ENCODE measurements at regions of chr19 and their contacts with region 1.

Region 1: GRCh38 chr19:15418588-15419412 is at the start of gene AKAP8L:
- DNase-seq: peak; percentile 98 to 99
- H3K4me3 ChIP-seq: peak within 1 kb of the TSS; percentile 89
- H3K4me3 Mint-ChIP-seq: peak within 1 kb of the TSS; percentile 96
- H3K27ac Mint-ChIP-seq: peak within 1 kb of the TSS; percentile 98
- H3K4me1 ChIP-seq: peaks cover 6% of the 10 kb centered on the region; the same call in 1 of the 2 replicates
- H3K4me1 Mint-ChIP-seq: peaks cover 6% of the 10 kb centered on the region
- H3K27me3 ChIP-seq: no peaks in the 10 kb centered on the region
- H3K27me3 Mint-ChIP-seq: no peaks in the 10 kb centered on the region
- CTCF ChIP-seq: peak; percentile 70 to 92
- total RNA-seq, gene AKAP8L: 112 and 127 TPM in 2 replicates

Region 2: GRCh38 chr19:15091901-15092753 is 326.7 kb before region 1 on chr19:
- CTCF ChIA-PET with region 1: interaction called, 5 read pairs
- POLR2A ChIA-PET with region 1: interaction called, 10 read pairs
- intact Hi-C with region 1: no loop called
- DNase-seq: peak in 1 of 2 experiments; percentile 63
- H3K4me3 ChIP-seq: no peak overlapping the region
- H3K4me3 Mint-ChIP-seq: no peak overlapping the region
- H3K27ac Mint-ChIP-seq: no peak overlapping the region
- H3K4me1 ChIP-seq: no peaks in the 10 kb centered on the region
- H3K4me1 Mint-ChIP-seq: no peaks in the 10 kb centered on the region
- H3K27me3 ChIP-seq: no peaks in the 10 kb centered on the region
- H3K27me3 Mint-ChIP-seq: peaks cover 12% of the 10 kb centered on the region
- CTCF ChIP-seq: peak; percentile 30 to 60

Region 3: GRCh38 chr19:15379083-15379995 is 39.5 kb before region 1 on chr19 and contains the start of gene AKAP8:
- CTCF ChIA-PET with region 1: interaction called, 20 read pairs
- POLR2A ChIA-PET with region 1: interaction called, 40 read pairs
- intact Hi-C with region 1: loop called (anchors 5 kb)
- DNase-seq: peak; percentile 97 to 98
- H3K4me3 ChIP-seq: peak within 1 kb of the TSS; percentile 98
- H3K4me3 Mint-ChIP-seq: peak within 1 kb of the TSS; percentile 86
- H3K27ac Mint-ChIP-seq: peak within 1 kb of the TSS; percentile 100
- H3K4me1 ChIP-seq: peaks cover 18% of the 10 kb centered on the region
- H3K4me1 Mint-ChIP-seq: peaks cover 16% of the 10 kb centered on the region
- H3K27me3 ChIP-seq: no peaks in the 10 kb centered on the region
- H3K27me3 Mint-ChIP-seq: no peaks in the 10 kb centered on the region
- CTCF ChIP-seq: no peak
- total RNA-seq, gene AKAP8: 53.5 and 53.7 TPM in 2 replicates

Region 4: DNA sequence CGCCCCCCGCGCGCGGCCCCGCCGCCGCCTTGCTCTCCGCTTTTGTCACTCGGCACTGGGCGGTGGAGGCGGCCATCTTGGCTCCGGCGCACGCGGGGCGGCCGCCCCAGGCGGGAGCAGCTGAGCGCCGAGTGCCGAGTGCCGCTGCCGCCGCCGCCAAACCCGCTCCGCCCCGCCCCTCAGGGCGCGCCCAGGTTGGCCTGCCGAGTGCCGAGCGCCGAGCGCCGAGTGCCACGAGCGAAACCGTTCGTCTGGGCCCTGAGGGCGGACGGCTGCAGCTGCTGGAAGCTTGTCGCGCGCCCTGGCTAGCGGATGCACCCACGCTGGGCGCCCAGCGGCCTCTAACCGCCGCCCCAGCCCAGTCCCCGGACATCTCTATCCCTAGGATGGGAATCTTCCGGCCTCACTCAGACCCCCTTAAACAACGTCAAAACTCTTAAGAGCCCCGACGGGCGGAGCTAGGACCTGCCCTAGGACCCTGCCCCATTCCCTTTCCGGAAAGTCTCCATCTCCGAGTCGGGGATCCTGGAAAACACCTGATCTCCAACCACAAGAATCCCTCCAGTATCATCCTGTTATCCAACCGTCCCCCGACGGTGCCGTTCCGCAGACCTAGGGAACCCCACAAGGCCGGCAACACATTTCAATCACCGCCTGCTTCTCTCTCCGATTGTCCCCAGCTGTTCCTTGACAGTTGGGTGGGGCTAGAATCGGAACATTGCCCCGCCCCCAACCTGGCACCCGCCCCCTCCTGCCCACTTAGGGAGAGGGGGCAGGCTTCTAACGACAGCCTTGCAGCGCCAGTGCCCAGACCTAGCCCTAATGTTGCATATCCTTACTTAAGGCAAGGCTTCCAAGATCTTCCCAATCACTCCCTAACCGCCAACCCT is 14.1 kb after region 1 on chr19:
- CTCF ChIA-PET with region 1: interaction called, 13 read pairs
- POLR2A ChIA-PET with region 1: interaction called, 13 read pairs
- intact Hi-C with region 1: no loop called
- DNase-seq: peak; percentile 90 to 94
- H3K4me3 ChIP-seq: peak overlapping the region; percentile 94
- H3K4me3 Mint-ChIP-seq: peak overlapping the region; percentile 98
- H3K27ac Mint-ChIP-seq: peak overlapping the region; percentile 88
- H3K4me1 ChIP-seq: peaks cover 14% of the 10 kb centered on the region
- H3K4me1 Mint-ChIP-seq: peaks cover 22% of the 10 kb centered on the region
- H3K27me3 ChIP-seq: no peaks in the 10 kb centered on the region
- H3K27me3 Mint-ChIP-seq: no peaks in the 10 kb centered on the region
- CTCF ChIP-seq: no peak

Region 5: DNA sequence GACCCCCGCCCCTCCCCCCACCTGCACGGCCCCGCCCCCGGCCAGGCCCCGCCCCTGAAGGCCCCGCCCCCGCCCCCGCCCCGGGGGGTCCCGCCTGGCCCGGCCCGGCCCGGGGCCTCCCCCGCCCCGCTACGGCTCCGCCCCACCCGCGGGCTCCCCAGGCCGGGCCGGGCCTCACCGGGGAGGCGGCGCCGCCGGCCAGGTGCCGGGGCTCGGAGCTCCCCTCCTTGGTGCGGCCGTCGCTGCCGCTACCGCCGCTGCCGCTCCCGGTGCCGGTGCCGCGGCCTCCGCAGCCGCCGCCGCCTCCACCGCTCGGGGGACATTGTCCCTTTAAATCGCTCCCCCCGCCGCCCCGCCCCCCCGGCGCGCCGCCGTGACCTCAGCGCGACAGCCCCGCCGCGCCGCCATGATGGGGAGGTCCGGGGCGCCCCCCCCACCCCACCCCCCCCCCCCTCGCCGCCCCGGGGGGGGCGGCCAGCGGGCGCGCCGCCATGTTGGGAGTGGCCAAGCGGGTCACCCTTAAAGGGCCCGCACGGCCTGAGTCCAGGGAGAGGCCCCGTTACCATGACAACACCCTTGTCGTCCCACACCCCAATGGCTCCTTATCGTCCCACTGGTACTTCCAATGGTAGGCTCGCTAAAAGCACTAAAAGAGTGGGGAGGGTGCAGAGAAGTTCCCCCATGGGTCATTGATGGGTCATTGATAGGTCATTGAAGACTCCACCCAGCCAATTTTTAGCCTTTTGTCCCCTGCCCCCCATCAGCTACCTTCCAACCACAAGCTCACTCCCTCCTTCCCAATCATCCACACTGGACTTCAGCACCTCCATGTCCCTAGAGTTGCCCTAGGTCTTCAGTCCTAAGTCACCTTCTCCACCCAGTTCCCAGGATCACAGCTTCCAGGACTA is 31.1 kb after region 1 on chr19 and contains the start of gene WIZ:
- CTCF ChIA-PET with region 1: interaction called, 4 read pairs
- POLR2A ChIA-PET with region 1: interaction called, 6 read pairs
- intact Hi-C with region 1: loop called (anchors 1 kb)
- DNase-seq: peak; percentile 82 to 87
- H3K4me3 ChIP-seq: peak within 1 kb of the TSS; percentile 74
- H3K4me3 Mint-ChIP-seq: peak within 1 kb of the TSS; percentile 75
- H3K27ac Mint-ChIP-seq: peak within 1 kb of the TSS; percentile 64
- H3K4me1 ChIP-seq: 0 out of 2 replicates have a peak, but pooled peaks cover 7% of the 10 kb centered on the region
- H3K4me1 Mint-ChIP-seq: peaks cover 16% of the 10 kb centered on the region
- H3K27me3 ChIP-seq: no peaks in the 10 kb centered on the region
- H3K27me3 Mint-ChIP-seq: no peaks in the 10 kb centered on the region
- CTCF ChIP-seq: no peak
- total RNA-seq, gene WIZ: 37.5 and 38.6 TPM in 2 replicates

Measured in Caco-2 (cell line).